Right ventricle myocardium inferior (tissue), 1 donor: ENCODE measurements at regions of chr15 and their contacts with region 1.

Region 1: DNA sequence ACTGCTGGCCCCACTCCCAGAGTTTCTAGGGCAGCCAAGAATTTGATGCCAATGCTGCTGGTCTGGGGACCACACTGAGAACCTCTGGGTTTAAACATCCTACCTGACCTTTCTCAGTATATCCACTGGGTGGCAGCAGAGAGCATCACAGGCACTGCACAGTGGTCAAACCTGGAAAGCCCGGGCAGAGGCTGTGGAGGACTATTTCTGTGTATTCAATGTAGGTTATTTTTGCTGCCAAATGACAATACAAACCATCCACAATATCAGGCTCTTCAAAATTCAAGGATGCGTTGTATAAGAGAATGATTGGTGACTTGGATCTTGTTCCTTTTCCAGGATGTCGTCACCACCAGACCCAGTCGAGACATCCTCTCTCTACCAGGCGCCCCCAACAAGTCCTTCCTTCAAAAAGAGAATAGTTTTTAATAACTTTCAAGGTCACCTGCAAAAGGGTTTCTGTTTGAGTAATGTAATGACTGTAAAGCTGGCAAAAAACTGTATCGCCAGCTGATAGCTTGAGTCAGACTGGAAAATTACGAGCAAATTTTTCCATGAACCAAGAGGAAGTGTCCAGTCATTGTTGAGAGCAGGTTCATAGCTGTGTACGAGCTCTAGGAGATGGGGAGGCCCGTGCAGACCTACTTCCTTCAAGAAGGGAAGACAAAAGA is 30.5 kb upstream of the MYZAP start:
- DNase-seq: peak; percentile 81
- ATAC-seq: peak; percentile 91

Region 2: DNA sequence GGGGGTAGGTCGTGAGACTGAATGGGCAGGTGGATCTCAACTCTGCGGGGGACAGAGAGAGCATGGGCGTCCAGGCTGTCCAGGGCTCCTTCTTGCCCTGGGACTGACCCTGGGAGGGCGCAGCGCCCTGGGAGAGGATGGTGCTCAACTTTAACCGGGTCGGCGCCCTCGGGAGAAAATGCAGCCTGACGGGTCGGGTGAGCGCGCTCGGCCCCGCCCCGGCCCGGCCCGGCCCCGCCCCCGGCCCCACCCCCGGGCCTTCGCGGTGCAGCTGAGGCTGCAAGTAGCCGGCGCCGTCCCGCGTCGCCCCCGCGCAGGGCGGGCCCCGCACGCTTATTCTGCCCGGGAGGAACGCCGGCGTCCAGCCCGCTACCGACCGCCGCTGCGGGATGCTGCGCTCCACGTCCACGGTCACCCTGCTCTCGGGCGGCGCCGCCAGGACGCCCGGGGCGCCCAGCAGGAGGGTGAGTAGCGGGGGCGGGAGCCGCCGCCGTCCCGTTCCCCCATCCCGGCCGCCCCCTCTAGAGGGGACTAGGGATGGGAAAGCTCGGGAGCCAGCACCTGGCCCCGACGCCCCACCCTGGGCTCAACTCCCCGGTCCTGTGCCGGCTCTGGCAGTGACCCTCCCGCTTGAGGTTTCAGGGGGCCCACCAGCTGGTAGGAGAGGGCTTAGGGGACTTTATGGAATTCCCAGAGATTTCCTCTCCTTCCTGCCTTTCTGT is 30.6 kb after region 1 on chr15 and contains the start of gene MYZAP:
- intact Hi-C with region 1: loop called (anchors 2 kb)
- DNase-seq: peak; percentile 77
- ATAC-seq: peak; percentile 56
- total RNA-seq, gene MYZAP: 869 TPM

Region 3: DNA sequence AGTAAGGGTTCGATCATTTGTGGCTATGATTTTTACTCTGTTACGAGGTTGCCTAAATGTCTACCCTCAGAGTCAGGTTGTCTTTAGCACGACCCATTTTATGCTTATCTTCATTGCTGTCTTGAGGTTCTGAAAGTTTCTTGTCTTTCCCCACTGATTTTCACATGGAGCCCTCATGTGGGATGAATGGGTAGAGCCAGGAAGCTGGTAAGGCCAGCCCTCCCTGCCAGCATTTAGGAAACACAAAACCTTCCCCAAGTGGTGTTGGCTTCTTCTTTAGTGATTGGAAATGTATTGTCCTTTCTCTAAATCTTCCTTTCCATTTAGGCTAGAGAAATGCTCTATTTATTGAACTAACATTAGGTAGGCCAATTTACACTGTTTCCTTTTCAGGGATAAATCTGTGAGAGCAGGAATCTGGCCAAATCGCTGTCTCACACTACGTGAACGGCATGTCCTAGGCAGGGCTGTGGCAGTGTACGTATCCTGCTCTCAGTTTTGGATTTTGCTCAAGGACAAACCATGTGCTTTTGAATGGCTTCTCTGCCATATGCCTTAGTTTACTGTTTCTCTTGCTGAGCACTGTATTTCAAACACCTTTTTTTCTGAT is 74.2 kb after region 1 on chr15:
- intact Hi-C with region 1: loop called (anchors 5 kb)
- DNase-seq: no peak
- ATAC-seq: peak; percentile 85

Region 4: GRCh38 chr15:57655809-57656208 is 94.6 kb after region 1 on chr15:
- intact Hi-C with region 1: loop called (anchors 2 kb)
- DNase-seq: no peak
- ATAC-seq: no peak

Region 5: DNA sequence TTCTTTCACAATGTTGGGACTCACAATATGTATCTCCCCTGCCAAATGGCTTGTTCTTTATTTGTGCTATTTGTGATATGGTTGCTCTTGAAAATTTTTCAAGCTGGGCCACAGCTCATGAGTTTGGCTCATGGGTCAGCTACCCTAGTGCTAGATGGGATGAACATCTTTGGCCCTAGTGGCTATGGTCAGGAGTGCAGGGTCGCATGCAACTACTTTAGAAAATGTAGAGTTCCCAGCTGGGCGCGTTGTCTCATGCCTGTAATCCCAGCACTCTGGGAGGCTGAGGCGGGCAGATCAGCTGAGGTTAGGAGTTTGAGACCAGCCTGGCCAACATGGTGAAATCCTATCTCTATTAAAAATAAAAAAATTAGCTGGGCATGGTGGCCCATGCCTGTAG is 201.1 kb after region 1 on chr15:
- intact Hi-C with region 1: no loop called
- DNase-seq: no peak
- ATAC-seq: no peak

Region 6: GRCh38 chr15:57861036-57861638 is 300.0 kb after region 1 on chr15:
- intact Hi-C with region 1: loop called (anchors 5 kb)
- DNase-seq: no peak
- ATAC-seq: no peak

Region 7: DNA sequence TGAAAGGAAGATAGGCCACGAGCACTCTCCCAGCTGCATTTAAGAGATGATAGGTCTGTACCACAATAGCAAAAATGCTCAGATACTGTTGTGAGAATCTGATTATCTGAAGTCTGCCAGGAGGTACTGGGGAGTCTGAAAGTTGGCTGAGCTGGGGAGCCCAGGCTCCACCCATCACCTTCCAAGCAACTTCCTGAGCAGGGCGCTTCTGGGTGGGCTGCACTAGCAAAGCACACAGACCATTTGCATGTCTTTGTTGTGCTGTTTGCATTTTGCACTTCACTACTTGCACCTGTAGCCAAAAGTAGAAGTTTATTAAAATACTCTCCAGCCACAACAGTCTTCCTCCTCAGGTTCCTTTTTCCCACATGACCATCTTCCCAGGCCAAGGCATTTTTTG is 371.2 kb after region 1 on chr15:
- intact Hi-C with region 1: no loop called
- DNase-seq: no peak
- ATAC-seq: no peak